ENCODE measurements at regions of chr18 and their contacts with region 1.

Region 1: DNA sequence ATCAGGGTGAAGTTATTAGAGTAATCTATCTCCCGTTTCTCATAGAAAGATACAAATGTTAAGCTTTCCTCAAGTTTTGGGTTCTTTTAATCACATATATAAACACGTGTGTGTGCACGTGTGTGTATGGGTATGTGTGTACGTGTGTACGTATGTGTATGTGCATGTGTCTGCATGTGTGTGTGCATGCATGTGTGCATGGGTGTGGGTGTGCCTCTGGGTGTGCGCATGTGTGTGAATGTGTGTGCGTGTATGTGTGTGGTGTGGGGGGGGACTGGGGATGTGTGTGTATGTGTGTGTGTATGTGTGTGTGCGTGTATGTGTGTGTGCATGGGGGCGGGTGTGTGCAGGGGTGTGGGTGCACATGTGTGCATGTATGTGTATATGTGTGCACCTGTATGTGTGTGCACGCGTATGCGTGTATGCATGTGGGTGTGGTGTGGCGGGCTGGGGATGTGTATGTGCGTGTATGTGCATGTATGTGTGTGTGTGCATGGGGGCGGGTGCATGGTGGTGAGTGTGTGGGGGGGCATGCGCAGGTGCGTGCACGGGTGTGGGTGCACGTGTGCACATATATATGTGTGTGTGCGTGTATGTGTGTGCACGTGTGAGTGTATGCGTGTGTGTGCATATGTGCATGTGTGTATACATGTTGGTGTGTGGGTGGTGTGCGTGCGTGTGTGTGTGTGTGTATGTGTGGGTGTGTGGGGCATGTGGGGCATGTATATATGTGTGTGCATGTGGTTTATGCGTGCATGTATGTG is 304.0 kb downstream of the MBD2 start:
- DNase-seq: no peak
- H3K4me3 ChIP-seq: no peak overlapping the region
- H3K27ac ChIP-seq: no peak overlapping the region
- H3K4me1 ChIP-seq: no peaks in the 10 kb centered on the region
- CTCF ChIP-seq: no peak

Region 2: GRCh38 chr18:53764086-53764485 is 156.4 kb before region 1 on chr18:
- CTCF ChIA-PET with region 1: no interaction called
- POLR2A ChIA-PET with region 1: no interaction called
- intact Hi-C with region 1: no loop called
- DNase-seq: no peak
- H3K4me3 ChIP-seq: no peak overlapping the region
- H3K27ac ChIP-seq: no peak overlapping the region
- H3K4me1 ChIP-seq: no peaks in the 10 kb centered on the region
- CTCF ChIP-seq: no peak

Region 3: DNA sequence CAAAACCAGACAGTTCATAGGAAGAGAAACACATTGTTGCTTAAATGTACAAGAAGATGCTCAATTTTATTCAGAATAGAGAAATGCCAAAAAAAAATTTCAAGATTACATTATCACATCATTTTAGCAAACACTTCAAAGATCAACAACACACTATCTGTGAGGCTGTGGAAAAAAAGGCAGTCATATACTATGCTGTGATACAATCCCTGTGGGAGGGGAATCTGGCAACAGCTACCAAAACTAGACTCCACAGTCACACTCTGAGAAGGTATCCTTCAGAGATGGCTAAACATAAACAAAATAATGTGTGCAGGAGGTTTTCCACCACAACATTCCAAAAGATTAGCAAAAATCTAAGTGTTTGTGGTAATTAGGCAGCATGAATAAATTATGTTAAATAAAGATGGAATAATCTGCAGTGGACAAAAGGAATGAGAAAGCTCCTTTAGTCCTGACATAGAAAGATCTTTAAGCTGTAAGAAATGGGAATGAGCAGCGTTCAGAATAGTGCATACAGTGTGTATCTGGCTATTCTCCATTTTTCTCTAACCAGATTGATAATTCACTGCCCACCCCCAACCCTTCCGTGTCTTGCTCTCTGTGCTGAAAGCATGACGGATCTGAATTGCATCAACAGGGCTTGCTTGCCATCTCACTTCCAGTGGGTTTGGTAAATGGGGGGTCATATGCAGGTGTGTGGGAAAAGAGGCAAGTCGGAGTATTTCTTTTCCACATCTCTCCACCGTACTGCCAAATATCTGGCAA is 25.6 kb before region 1 on chr18:
- CTCF ChIA-PET with region 1: no interaction called
- POLR2A ChIA-PET with region 1: no interaction called
- intact Hi-C with region 1: no loop called
- DNase-seq: no peak
- H3K4me3 ChIP-seq: no peak overlapping the region
- H3K27ac ChIP-seq: no peak overlapping the region
- H3K4me1 ChIP-seq: no peaks in the 10 kb centered on the region
- CTCF ChIP-seq: no peak

Region 4: GRCh38 chr18:54416436-54416835 is 495.9 kb after region 1 on chr18:
- CTCF ChIA-PET with region 1: no interaction called
- POLR2A ChIA-PET with region 1: no interaction called
- intact Hi-C with region 1: loop called (anchors 10 kb)
- DNase-seq: no peak
- H3K4me3 ChIP-seq: no peak overlapping the region
- H3K27ac ChIP-seq: no peak overlapping the region
- H3K4me1 ChIP-seq: no peaks in the 10 kb centered on the region
- CTCF ChIP-seq: no peak

Measured in OCI-LY7 (cell line).